ENCODE measurements at regions of chr7 and their contacts with region 1.

Region 1: DNA sequence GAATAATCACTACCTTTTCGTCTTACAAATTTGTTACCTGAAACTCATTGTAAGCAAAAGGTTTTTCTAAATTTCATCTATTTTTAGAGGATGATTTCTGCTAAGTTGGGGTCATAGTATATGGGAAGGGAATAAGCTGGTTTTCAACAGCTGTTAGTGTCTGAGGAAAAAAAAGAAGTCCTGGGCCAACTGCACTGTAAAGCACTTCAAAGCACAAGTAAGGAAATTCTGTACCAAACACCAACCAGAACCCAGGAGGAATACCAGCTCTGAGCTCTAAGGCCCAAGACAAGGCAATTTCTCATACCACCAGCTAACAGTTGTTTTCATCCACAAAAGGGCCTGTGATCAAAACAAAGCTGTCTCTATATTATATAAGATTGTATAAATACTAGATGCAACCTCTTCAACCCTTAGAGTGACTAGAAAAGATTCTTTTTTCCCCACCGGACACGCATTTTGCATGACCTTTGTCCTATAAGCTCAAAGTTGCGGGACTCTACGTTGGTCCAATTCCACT is 6.1 kb upstream of the MEOX2 start:
- DNase-seq: no peak
- H3K4me3 ChIP-seq: no peak overlapping the region
- H3K27ac ChIP-seq: no peak overlapping the region
- H3K4me1 ChIP-seq: no peaks in the 10 kb centered on the region
- H3K27me3 ChIP-seq: no peaks in the 10 kb centered on the region
- CTCF ChIP-seq: no peak
- POLR2A ChIP-seq: no peak

Region 2: GRCh38 chr7:15737601-15738000 is 45.0 kb after region 1 on chr7:
- intact Hi-C with region 1: no loop called
- DNase-seq: no peak
- H3K4me3 ChIP-seq: no peak overlapping the region
- H3K27ac ChIP-seq: no peak overlapping the region
- H3K4me1 ChIP-seq: no peaks in the 10 kb centered on the region
- H3K27me3 ChIP-seq: no peaks in the 10 kb centered on the region
- CTCF ChIP-seq: no peak
- POLR2A ChIP-seq: no peak

Region 3: GRCh38 chr7:15753887-15754579 is 61.5 kb after region 1 on chr7:
- intact Hi-C with region 1: no loop called
- DNase-seq: no peak
- H3K4me3 ChIP-seq: no peak overlapping the region
- H3K27ac ChIP-seq: no peak overlapping the region
- H3K4me1 ChIP-seq: peaks cover 4% of the 10 kb centered on the region
- H3K27me3 ChIP-seq: no peaks in the 10 kb centered on the region
- CTCF ChIP-seq: no peak
- POLR2A ChIP-seq: no peak

Region 4: DNA sequence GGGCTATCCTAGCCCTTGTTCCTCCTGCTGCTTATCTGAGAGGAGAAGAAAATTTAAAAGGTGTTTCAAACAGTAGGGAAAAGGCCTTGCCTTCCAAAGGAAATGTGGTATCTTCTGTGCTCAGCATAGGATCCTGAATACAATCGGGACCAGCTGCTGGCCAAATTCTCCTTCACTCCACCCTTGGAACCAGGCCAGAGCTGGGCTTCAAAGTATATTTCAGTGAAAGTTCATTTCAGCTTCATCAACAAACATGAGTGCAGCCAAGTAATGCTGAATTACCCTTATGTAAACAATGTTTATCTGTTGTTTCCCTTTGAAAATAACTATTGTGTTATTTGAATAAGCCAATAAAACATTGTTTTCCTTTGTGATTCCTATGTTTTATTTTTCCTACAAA is 140.4 kb after region 1 on chr7:
- intact Hi-C with region 1: no loop called
- DNase-seq: peak; percentile 57
- H3K4me3 ChIP-seq: no peak overlapping the region
- H3K27ac ChIP-seq: peak overlapping the region in 1 of 2 donors; percentile 55
- H3K4me1 ChIP-seq: peaks cover 4% of the 10 kb centered on the region
- H3K27me3 ChIP-seq: no peaks in the 10 kb centered on the region
- CTCF ChIP-seq: no peak
- POLR2A ChIP-seq: no peak

Region 5: DNA sequence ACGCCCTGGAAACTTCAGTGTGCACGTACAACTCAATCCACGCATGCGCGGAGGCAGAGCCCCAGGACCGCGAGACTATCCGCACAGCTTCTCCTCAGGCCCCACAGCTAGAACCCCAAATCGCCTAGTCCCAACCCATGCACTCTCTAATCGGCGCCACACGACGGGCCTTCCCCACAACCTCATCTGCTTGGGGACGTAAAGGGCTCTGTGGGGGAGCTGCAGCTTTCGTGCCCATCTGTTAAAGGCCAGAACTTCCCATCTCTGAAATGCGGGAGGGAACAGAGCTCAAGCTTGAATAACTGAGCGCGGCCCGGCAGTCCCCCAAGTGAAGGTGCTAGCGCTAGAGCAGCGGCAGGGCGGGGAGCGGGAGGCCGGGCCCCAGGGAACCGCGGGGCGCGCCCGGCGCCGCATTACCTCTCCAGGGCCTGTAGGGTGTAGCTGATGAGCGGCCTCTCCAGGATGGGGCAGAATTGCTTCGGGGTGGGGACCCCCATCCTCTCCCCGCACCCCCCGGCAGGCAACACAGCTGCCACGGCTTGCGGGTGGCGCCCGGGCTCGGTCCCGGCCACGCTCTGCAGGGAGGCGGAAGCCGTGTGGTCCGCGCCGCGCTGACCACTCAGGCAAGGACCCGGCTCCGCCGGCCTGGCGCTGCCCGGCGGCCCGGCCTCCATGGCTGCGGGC is 728.2 kb after region 1 on chr7:
- intact Hi-C with region 1: loop called (anchors 10 kb)
- DNase-seq: peak; percentile 93
- H3K4me3 ChIP-seq: peak overlapping the region; percentile 72 to 77
- H3K27ac ChIP-seq: peak overlapping the region; percentile 93 to 98
- H3K4me1 ChIP-seq: peaks cover 16% of the 10 kb centered on the region
- H3K27me3 ChIP-seq: no peaks in the 10 kb centered on the region
- CTCF ChIP-seq: peak in 1 of 3 experiments; percentile 19
- POLR2A ChIP-seq: peak; percentile 73